Caco-2 (cell line): ENCODE measurements at regions of chr2 and their contacts with region 1.

Region 1: DNA sequence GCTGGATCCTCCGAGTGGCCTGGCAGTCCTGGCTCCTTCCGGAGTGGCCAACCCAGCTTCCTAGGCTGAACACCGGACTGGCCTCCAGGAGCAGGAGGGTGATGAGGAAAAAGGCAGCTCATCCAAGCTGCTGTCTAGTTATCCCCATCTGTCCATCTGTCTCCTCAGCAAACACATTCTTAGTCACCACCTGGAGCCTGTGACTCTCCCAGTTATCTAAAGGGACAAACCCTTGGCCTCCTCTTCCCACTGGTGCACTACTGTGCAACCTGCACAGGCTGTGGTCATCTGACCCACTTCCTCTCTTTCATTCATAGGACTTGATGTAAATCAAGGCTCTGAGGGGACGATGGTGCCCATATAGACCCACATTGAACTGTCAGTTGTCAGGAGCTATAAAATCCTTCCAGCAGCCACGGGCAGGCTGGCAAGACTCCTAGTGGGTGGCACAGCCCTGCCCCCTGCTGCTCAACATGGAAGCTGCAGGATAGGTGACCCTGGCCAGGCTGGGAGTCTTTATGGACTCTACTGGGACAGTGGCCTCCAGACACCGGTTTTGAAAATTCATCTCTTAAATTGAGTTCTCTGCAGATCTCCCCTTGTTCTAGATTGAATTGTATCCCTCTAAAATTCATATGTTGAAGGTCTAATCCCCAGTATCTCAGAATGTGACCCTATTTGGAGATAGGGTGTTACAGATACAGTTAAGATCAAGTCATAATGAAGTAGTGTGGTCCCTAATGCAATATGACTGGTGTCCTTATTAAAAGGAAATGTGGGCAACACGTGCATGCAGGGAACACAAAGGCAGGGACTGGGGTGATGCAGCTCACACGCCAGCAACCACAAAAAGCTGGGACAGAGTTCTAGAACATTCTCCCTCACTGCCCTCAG is 29.3 kb upstream of the DUSP2 start:
- DNase-seq: peak; percentile 76 to 86
- H3K4me3 ChIP-seq: no peak overlapping the region
- H3K4me3 Mint-ChIP-seq: no peak overlapping the region
- H3K27ac Mint-ChIP-seq: no peak overlapping the region
- H3K4me1 ChIP-seq: no peaks in the 10 kb centered on the region
- H3K4me1 Mint-ChIP-seq: no peaks in the 10 kb centered on the region
- H3K27me3 ChIP-seq: no peaks in the 10 kb centered on the region
- H3K27me3 Mint-ChIP-seq: no peaks in the 10 kb centered on the region
- CTCF ChIP-seq: peak; percentile 89 to 96

Region 2: DNA sequence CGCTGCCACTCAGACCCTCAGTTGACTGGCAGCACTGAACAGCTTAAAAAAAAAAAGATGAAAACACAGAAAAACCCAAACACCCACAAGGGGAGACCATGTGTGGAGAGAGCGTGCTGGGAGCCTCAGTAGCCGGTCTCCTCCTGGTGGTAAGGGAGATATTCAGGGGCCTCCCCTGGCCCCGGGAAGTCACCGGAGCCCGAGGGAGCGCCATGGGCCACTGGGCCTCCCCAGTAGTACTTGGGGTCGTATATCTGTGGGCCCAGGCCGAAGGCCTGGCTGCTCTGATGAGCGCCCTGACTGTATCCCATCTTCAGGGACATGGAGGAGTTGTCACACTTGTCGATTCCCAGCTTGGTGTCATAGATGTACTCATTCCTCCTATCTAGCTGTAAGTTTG is 1449.0 kb before region 1 on chr2:
- CTCF ChIA-PET with region 1: no interaction called
- POLR2A ChIA-PET with region 1: no interaction called
- intact Hi-C with region 1: no loop called
- DNase-seq: no peak
- H3K4me3 ChIP-seq: no peak overlapping the region
- H3K4me3 Mint-ChIP-seq: no peak overlapping the region
- H3K27ac Mint-ChIP-seq: no peak overlapping the region
- H3K4me1 ChIP-seq: no peaks in the 10 kb centered on the region
- H3K4me1 Mint-ChIP-seq: no peaks in the 10 kb centered on the region
- H3K27me3 ChIP-seq: no peaks in the 10 kb centered on the region
- H3K27me3 Mint-ChIP-seq: peaks cover 3% of the 10 kb centered on the region
- CTCF ChIP-seq: no peak

Region 3: GRCh38 chr2:96024336-96025193 is 149.9 kb before region 1 on chr2:
- CTCF ChIA-PET with region 1: interaction called, 20 read pairs
- POLR2A ChIA-PET with region 1: interaction called, 3 read pairs
- intact Hi-C with region 1: loop called (anchors 10 kb)
- DNase-seq: peak in 1 of 2 experiments; percentile 29
- H3K4me3 ChIP-seq: no peak overlapping the region
- H3K4me3 Mint-ChIP-seq: no peak overlapping the region
- H3K27ac Mint-ChIP-seq: no peak overlapping the region
- H3K4me1 ChIP-seq: no peaks in the 10 kb centered on the region
- H3K4me1 Mint-ChIP-seq: peaks cover 5% of the 10 kb centered on the region
- H3K27me3 ChIP-seq: no peaks in the 10 kb centered on the region
- H3K27me3 Mint-ChIP-seq: no peaks in the 10 kb centered on the region
- CTCF ChIP-seq: no peak

Region 4: GRCh38 chr2:96108541-96109360 is 65.7 kb before region 1 on chr2:
- CTCF ChIA-PET with region 1: interaction called, 7 read pairs
- POLR2A ChIA-PET with region 1: no interaction called
- intact Hi-C with region 1: loop called (anchors 2 kb)
- DNase-seq: no peak
- H3K4me3 ChIP-seq: no peak overlapping the region
- H3K4me3 Mint-ChIP-seq: no peak overlapping the region
- H3K27ac Mint-ChIP-seq: peak overlapping the region; percentile 21
- H3K4me1 ChIP-seq: peaks cover 9% of the 10 kb centered on the region; the same call in 1 of the 2 replicates
- H3K4me1 Mint-ChIP-seq: no peaks in the 10 kb centered on the region
- H3K27me3 ChIP-seq: no peaks in the 10 kb centered on the region
- H3K27me3 Mint-ChIP-seq: no peaks in the 10 kb centered on the region
- CTCF ChIP-seq: no peak

Region 5: GRCh38 chr2:96116879-96117697 is 57.4 kb before region 1 on chr2:
- CTCF ChIA-PET with region 1: interaction called, 10 read pairs
- POLR2A ChIA-PET with region 1: no interaction called
- intact Hi-C with region 1: no loop called
- DNase-seq: peak in 1 of 2 experiments; percentile 84
- H3K4me3 ChIP-seq: peak overlapping the region; percentile 64
- H3K4me3 Mint-ChIP-seq: peak overlapping the region; percentile 78
- H3K27ac Mint-ChIP-seq: no peak overlapping the region
- H3K4me1 ChIP-seq: peaks cover 14% of the 10 kb centered on the region
- H3K4me1 Mint-ChIP-seq: peaks cover 5% of the 10 kb centered on the region
- H3K27me3 ChIP-seq: no peaks in the 10 kb centered on the region
- H3K27me3 Mint-ChIP-seq: peaks cover 23% of the 10 kb centered on the region
- CTCF ChIP-seq: peak; percentile 54 to 85

Region 6: DNA sequence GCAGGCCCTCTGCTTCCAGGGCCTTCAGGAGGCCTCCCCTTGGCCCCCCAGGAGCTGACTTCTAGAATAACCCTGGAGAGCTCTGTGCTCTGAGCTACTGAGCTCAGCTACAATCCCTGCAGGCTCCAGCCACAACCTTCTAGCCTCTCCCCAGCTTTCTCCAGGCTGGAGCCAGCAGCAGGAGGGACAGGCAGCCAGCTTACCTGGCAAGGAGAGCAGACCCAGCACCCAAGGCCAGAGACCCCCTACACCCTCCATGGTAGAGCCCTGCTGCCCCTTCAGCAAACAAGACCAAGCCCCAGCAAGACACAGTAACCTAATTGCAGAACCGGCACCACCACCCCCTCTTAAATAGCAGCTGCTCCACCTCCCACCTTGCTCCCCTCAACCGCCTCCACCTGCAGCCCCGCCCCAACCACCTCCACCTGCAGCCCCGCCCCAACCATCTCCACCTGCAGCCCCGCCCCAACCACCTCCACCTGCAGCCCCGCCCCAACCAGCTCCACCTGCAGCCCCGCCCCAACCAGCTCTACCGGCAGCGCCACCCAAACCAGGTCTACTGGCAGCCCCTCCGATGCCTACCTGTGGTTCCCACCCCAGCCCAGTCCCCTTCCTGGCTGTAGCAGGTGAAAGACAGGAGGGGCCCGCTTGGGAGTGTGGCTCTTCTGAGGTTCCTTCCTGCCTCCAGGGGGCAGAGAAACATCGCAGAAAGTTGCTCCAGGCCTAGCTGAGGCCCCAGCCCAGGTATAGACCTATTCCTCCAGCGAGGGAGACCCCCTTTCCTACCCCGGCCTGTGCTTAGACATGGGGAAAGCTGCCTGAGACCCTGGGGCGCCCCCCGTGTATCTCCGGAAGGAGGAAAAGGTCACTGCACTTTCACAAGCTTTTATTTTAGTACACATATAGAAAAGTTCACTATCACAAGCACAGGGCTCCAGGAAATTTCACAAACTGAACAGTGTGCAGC is 36.0 kb before region 1 on chr2 and contains the start of gene ASTL:
- CTCF ChIA-PET with region 1: interaction called, 81 read pairs
- POLR2A ChIA-PET with region 1: interaction called, 4 read pairs
- intact Hi-C with region 1: loop called (anchors 1 kb)
- DNase-seq: peak; percentile 86 to 90
- H3K4me3 ChIP-seq: peak within 1 kb of the TSS; percentile 26
- H3K4me3 Mint-ChIP-seq: peak within 1 kb of the TSS; percentile 52
- H3K27ac Mint-ChIP-seq: no peak within 1 kb of the TSS
- H3K4me1 ChIP-seq: peaks cover 4% of the 10 kb centered on the region; the same call in 1 of the 2 replicates
- H3K4me1 Mint-ChIP-seq: peaks cover 6% of the 10 kb centered on the region
- H3K27me3 ChIP-seq: no peaks in the 10 kb centered on the region
- H3K27me3 Mint-ChIP-seq: peaks cover 8% of the 10 kb centered on the region
- CTCF ChIP-seq: peak; percentile 42 to 76
- total RNA-seq, gene ASTL: 0.23 TPM in 1 of 2 replicates, not detected in the other

Region 7: GRCh38 chr2:96186562-96186961 is 12.1 kb after region 1 on chr2:
- CTCF ChIA-PET with region 1: interaction called, 11 read pairs
- POLR2A ChIA-PET with region 1: no interaction called
- intact Hi-C with region 1: no loop called
- DNase-seq: no peak
- H3K4me3 ChIP-seq: no peak overlapping the region
- H3K4me3 Mint-ChIP-seq: no peak overlapping the region
- H3K27ac Mint-ChIP-seq: peak overlapping the region; percentile 39
- H3K4me1 ChIP-seq: peaks cover 25% of the 10 kb centered on the region
- H3K4me1 Mint-ChIP-seq: peaks cover 20% of the 10 kb centered on the region
- H3K27me3 ChIP-seq: no peaks in the 10 kb centered on the region
- H3K27me3 Mint-ChIP-seq: no peaks in the 10 kb centered on the region
- CTCF ChIP-seq: no peak

Region 8: DNA sequence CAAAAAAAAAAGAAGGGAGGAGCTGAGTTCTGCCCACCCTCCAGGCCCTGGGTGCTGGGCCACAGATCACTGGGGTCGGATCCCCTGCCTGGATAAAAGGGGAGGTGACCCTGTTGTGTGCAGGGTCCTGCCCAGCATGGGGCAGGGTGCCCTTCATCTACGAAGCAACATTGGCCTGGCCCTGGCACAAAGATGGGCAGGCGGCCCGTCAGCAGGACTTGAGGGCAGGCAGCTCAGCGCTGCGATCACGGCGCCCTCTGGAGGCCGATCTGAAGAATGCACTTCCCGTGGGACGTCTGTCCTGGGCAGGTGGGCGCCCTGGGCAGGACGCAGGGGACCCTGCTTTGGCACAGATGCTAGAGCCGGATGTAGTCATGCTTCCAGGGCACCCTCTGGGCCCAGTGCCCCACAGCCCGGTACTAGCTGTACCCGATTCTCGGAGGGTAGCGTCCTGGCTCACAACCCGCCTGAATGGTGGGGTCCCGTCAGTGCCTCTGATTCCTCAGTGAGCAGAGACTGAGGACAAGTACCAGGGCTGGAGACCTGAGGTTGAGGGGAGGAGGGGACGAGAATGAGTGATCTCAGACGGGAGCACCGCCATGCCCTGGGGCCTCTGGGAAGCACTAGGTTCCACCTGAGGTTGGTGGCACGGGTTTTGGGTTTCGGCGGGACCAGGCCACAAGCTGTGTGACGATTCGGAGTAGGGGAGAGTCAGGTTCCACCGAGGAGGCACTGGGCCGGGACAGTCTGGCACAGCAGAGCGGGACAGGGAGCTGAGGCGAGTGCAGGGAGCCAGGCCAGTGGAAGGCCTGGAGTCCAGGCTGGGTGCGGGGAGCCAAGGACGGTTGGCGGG is 380.0 kb after region 1 on chr2:
- CTCF ChIA-PET with region 1: no interaction called
- POLR2A ChIA-PET with region 1: no interaction called
- intact Hi-C with region 1: no loop called
- DNase-seq: peak; percentile 46 to 64
- H3K4me3 ChIP-seq: no peak overlapping the region
- H3K4me3 Mint-ChIP-seq: peak overlapping the region; percentile 29
- H3K27ac Mint-ChIP-seq: peak overlapping the region; percentile 48
- H3K4me1 ChIP-seq: peaks cover 18% of the 10 kb centered on the region
- H3K4me1 Mint-ChIP-seq: peaks cover 16% of the 10 kb centered on the region
- H3K27me3 ChIP-seq: no peaks in the 10 kb centered on the region
- H3K27me3 Mint-ChIP-seq: no peaks in the 10 kb centered on the region
- CTCF ChIP-seq: peak; percentile 79 to 88